ENCODE measurements at regions of chr4 and their contacts with region 1.

Region 1: GRCh38 chr4:77819843-77820648 is 878 bp upstream of the CNOT6L start:
- DNase-seq: peak; percentile 97
- H3K4me3 ChIP-seq: peak overlapping the region; percentile 90
- H3K27ac ChIP-seq: peak overlapping the region; percentile 100
- H3K4me1 ChIP-seq: no peaks in the 10 kb centered on the region
- H3K27me3 ChIP-seq: no peaks in the 10 kb centered on the region
- CTCF ChIP-seq: no peak

Region 2: DNA sequence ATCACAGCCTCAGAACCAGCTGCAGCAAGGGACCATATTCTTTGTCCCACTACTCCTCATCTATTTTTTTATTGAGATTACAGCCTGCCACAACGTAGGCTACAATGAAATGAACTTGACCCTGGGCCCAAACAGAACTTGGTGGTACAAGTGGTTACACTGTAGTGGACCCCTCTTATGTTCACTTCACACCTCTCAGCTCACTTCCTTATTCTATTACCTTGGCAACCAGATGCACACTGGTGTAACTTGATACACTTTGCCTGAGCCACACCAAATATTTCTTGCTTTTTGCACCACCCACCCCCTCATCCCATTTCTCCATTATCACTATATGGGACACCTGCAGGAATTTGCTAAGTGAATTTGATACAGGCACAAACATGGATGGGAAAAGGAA is 108.6 kb before region 1 on chr4:
- intact Hi-C with region 1: no loop called
- DNase-seq: no peak
- H3K4me3 ChIP-seq: no peak overlapping the region
- H3K27ac ChIP-seq: no peak overlapping the region
- H3K4me1 ChIP-seq: no peaks in the 10 kb centered on the region
- H3K27me3 ChIP-seq: no peaks in the 10 kb centered on the region
- CTCF ChIP-seq: no peak

Region 3: DNA sequence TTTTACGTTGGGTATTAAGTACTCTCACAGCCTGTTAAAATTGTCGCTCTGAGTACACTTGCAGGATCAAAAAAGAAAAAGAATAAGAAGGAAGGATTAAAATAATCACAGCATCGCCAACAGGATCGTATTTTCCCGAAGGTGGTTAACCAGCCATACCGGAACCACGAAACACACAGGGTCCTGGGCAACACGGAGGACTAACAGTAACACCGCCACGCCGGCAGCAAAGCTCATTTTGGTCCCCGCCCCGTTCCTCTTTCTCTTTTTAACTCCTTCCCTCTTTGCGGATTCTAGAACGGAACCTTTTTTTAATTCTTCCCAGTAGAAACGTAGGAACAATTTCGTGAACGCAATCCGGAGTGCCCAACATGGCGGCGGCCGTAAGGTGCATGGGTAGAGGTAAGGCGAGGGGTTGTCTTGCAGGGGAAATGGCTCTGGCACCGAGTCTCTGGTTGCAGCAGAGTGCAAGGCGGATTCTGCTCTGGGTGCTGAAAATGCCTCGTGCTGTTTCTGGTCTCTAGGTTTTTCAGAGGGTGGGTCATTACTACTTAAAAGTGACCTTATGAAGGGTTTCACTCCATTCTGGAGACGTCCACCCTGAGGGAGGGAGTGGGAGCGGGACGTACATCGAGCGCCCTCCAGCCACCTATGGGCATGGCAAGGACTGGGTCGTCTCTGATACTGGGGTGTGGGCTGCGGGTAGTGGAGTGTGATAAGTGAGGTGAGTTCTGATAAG is 42.6 kb after region 1 on chr4 and contains the start of gene MRPL1:
- intact Hi-C with region 1: loop called (anchors 5 kb)
- DNase-seq: peak; percentile 92
- H3K4me3 ChIP-seq: peak within 1 kb of the TSS; percentile 79
- H3K27ac ChIP-seq: peak within 1 kb of the TSS; percentile 96
- H3K4me1 ChIP-seq: no peaks in the 10 kb centered on the region
- H3K27me3 ChIP-seq: no peaks in the 10 kb centered on the region
- CTCF ChIP-seq: no peak
- total RNA-seq, gene MRPL1: 37.2 to 42.3 TPM

Measured in colonic mucosa (tissue), 4 donors.